IMR-90 (cell line): ENCODE measurements at regions of chr13 and their contacts with region 1.

Region 1: GRCh38 chr13:101144808-101145419 is 271.4 kb downstream of the NALCN start:
- DNase-seq: peak; percentile 71
- ATAC-seq: peak; percentile 81
- H3K4me3 ChIP-seq: no peak overlapping the region
- H3K27ac ChIP-seq: no peak overlapping the region
- H3K4me1 ChIP-seq: peaks cover 5% of the 10 kb centered on the region
- H3K27me3 ChIP-seq: no peaks in the 10 kb centered on the region
- CTCF ChIP-seq: peak; percentile 85
- POLR2A ChIP-seq: no peak
- RAD21 ChIP-seq: peak; percentile 91

Region 2: DNA sequence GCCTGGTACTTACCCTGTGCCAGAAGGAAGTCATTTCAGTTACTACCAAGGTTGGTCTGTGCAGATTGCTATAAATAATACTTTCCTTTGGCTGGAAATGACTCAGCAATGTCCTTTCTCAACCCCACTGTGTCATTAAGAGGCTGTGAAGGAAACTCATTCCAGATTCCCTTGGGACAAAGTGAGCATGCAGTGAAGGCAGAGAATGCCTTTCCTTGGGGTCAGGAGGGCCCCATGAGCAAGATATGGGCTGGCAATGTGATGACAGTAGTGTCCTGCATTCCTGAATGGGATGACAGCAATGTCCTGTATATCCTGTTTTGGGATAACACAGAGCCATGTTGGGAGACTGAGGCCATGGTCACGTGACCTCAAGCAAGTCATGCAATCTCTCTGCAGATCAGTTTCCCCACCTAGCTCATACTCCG is 257.2 kb before region 1 on chr13:
- CTCF ChIA-PET with region 1: no interaction called
- POLR2A ChIA-PET with region 1: no interaction called
- dilution Hi-C with region 1: no loop called
- in situ Hi-C with region 1: no loop called
- intact Hi-C with region 1: no loop called
- DNase-seq: peak; percentile 82
- ATAC-seq: peak; percentile 63
- H3K4me3 ChIP-seq: no peak overlapping the region
- H3K27ac ChIP-seq: peak overlapping the region; percentile 8; the same call in 1 of the 2 replicates
- H3K4me1 ChIP-seq: peaks cover 2% of the 10 kb centered on the region; the same call in 1 of the 2 replicates
- H3K27me3 ChIP-seq: no peaks in the 10 kb centered on the region
- CTCF ChIP-seq: no peak
- POLR2A ChIP-seq: no peak
- RAD21 ChIP-seq: no peak

Region 3: GRCh38 chr13:101416174-101417042 is 271.5 kb after region 1 on chr13 and contains the start of gene NALCN:
- CTCF ChIA-PET with region 1: no interaction called
- POLR2A ChIA-PET with region 1: no interaction called
- dilution Hi-C with region 1: no loop called
- in situ Hi-C with region 1: no loop called
- intact Hi-C with region 1: loop called (anchors 5 kb)
- DNase-seq: no peak
- ATAC-seq: peak; percentile 92
- H3K4me3 ChIP-seq: peak within 1 kb of the TSS; percentile 65
- H3K27ac ChIP-seq: peak within 1 kb of the TSS; percentile 20; the same call in 1 of the 2 replicates
- H3K4me1 ChIP-seq: peaks cover 2% of the 10 kb centered on the region; the same call in 1 of the 2 replicates
- H3K27me3 ChIP-seq: no peaks in the 10 kb centered on the region
- CTCF ChIP-seq: no peak
- POLR2A ChIP-seq: no peak
- RAD21 ChIP-seq: no peak
- total RNA-seq, gene NALCN: 4.8 and 5.6 TPM in 2 replicates

Region 4: GRCh38 chr13:101474419-101474957 is 329.6 kb after region 1 on chr13:
- CTCF ChIA-PET with region 1: interaction called, 11 read pairs
- POLR2A ChIA-PET with region 1: no interaction called
- dilution Hi-C with region 1: no loop called
- in situ Hi-C with region 1: loop called (anchors 5 kb)
- intact Hi-C with region 1: loop called (anchors 1 kb)
- DNase-seq: peak; percentile 91
- ATAC-seq: peak; percentile 60
- H3K4me3 ChIP-seq: no peak overlapping the region
- H3K27ac ChIP-seq: no peak overlapping the region
- H3K4me1 ChIP-seq: peaks cover 13% of the 10 kb centered on the region
- H3K27me3 ChIP-seq: no peaks in the 10 kb centered on the region
- CTCF ChIP-seq: peak; percentile 90
- POLR2A ChIP-seq: no peak
- RAD21 ChIP-seq: peak; percentile 96

Region 5: DNA sequence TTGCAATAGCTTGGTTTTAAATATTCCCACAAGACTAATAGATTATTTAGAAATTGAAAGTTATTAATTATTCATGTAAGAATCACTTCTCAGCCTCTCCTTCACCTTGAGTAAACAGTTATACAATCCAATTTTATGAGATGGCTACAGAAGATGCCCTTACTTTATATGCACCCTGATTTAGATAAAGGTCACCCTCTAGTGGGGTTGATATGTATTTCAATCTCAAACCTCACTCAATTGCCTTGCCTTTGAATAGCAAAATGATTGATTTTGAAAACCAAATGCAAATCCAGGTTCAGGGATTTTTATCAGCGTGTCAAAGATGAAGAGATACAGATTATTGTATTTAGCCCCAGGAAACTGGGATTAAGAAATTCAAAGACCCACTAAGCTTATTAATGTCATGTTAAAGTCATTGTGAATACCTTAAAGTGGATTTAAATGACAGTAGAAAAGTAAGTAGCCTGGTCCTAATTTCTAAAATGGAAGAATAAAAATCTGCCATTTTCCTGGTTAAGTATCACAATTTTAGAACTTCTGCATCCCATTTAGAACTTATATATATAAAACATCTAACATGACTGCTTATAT is 612.6 kb after region 1 on chr13:
- CTCF ChIA-PET with region 1: interaction called, 6 read pairs
- POLR2A ChIA-PET with region 1: no interaction called
- dilution Hi-C with region 1: no loop called
- in situ Hi-C with region 1: loop called (anchors 10 kb)
- intact Hi-C with region 1: loop called (anchors 1 kb)
- DNase-seq: peak; percentile 50
- ATAC-seq: peak; percentile 73; the same call in 1 of the 2 replicates
- H3K4me3 ChIP-seq: no peak overlapping the region
- H3K27ac ChIP-seq: no peak overlapping the region
- H3K4me1 ChIP-seq: no peaks in the 10 kb centered on the region
- H3K27me3 ChIP-seq: peaks cover 2% of the 10 kb centered on the region; the same call in 1 of the 2 replicates
- CTCF ChIP-seq: peak; percentile 73
- POLR2A ChIP-seq: no peak
- RAD21 ChIP-seq: peak; percentile 80

Region 6: GRCh38 chr13:102089177-102089576 is 944.3 kb after region 1 on chr13:
- CTCF ChIA-PET with region 1: no interaction called
- POLR2A ChIA-PET with region 1: no interaction called
- dilution Hi-C with region 1: no loop called
- in situ Hi-C with region 1: no loop called
- intact Hi-C with region 1: loop called (anchors 2 kb)
- DNase-seq: no peak
- ATAC-seq: peak; percentile 53; the same call in 1 of the 2 replicates
- H3K4me3 ChIP-seq: no peak overlapping the region
- H3K27ac ChIP-seq: no peak overlapping the region
- H3K4me1 ChIP-seq: no peaks in the 10 kb centered on the region
- H3K27me3 ChIP-seq: no peaks in the 10 kb centered on the region
- CTCF ChIP-seq: 0 out of 2 replicates have a peak, but pooled peaks have one; percentile 22
- POLR2A ChIP-seq: no peak
- RAD21 ChIP-seq: no peak

Region 7: GRCh38 chr13:102452831-102453230 is 1307.9 kb after region 1 on chr13:
- CTCF ChIA-PET with region 1: interaction called, 3 read pairs
- POLR2A ChIA-PET with region 1: interaction called, 3 read pairs
- dilution Hi-C with region 1: no loop called
- in situ Hi-C with region 1: no loop called
- intact Hi-C with region 1: loop called (anchors 10 kb)
- DNase-seq: peak; percentile 16
- ATAC-seq: no peak
- H3K4me3 ChIP-seq: no peak overlapping the region
- H3K27ac ChIP-seq: no peak overlapping the region
- H3K4me1 ChIP-seq: no peaks in the 10 kb centered on the region
- H3K27me3 ChIP-seq: no peaks in the 10 kb centered on the region; the same call in 1 of the 2 replicates
- CTCF ChIP-seq: no peak
- POLR2A ChIP-seq: no peak
- RAD21 ChIP-seq: no peak